Activated CD4-positive, alpha-beta T cell treated with anti-CD3 and anti-CD28 coated beads for 36 hours (primary cell): ENCODE measurements at regions of chr4 and their contacts with region 1.

Region 1: GRCh38 chr4:110516106-110516922 is 40.4 kb downstream of the ENPEP start:
- DNase-seq: peak; percentile 83
- ATAC-seq: peak; percentile 90
- H3K4me3 Mint-ChIP-seq: peak overlapping the region; percentile 87
- H3K27ac Mint-ChIP-seq: peak overlapping the region; percentile 48
- H3K4me1 Mint-ChIP-seq: peaks cover 15% of the 10 kb centered on the region
- H3K27me3 Mint-ChIP-seq: peaks cover 10% of the 10 kb centered on the region

Region 2: GRCh38 chr4:109998867-109999584 is 517.3 kb before region 1 on chr4:
- CTCF ChIA-PET with region 1: interaction called, 398 read pairs
- POLR2A ChIA-PET with region 1: no interaction called
- intact Hi-C with region 1: loop called (anchors 1 kb)
- DNase-seq: no peak
- ATAC-seq: peak; percentile 31
- H3K4me3 Mint-ChIP-seq: no peak overlapping the region
- H3K27ac Mint-ChIP-seq: no peak overlapping the region
- H3K4me1 Mint-ChIP-seq: peaks cover 10% of the 10 kb centered on the region
- H3K27me3 Mint-ChIP-seq: peaks cover 9% of the 10 kb centered on the region

Region 3: DNA sequence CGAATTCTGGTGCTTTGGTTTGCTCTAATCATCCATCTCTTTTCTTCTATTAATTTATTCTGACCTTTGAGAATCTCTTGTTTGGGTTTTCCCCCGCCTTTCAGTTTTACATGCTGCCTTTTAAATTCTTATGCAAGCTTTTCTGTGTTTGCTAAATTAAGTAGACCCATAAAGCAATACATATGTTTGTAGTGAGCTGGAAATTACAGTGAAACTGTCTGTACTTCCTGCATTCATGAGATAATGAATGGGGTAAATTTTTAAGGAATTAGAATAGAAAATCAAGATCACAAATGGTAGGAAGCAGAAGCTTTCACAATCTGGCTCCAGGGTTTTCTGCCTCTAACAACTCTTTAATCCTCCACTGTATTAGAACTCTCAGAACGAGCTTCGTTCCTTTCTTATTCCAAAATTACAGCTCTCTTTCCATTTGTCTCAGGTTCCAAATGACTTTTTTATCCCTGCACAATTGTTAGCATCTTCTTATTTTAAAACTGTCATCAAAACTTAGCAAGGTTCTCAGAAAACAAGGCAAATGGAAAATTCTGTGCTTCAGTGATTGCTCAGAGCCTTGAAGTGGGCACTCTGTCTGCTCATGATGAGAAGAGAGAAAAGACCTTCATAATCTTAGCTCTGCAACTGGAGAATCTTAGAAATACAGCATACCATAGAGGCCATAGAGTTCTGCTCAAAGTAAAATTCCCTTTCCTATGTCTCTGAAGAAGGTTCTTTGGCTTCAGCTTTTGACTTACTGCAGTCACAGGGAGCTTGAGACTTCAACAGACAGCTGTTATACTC is 495.5 kb before region 1 on chr4:
- CTCF ChIA-PET with region 1: interaction called, 13 read pairs
- POLR2A ChIA-PET with region 1: no interaction called
- intact Hi-C with region 1: no loop called
- DNase-seq: no peak
- ATAC-seq: no peak
- H3K4me3 Mint-ChIP-seq: no peak overlapping the region
- H3K27ac Mint-ChIP-seq: no peak overlapping the region
- H3K4me1 Mint-ChIP-seq: peaks cover 18% of the 10 kb centered on the region
- H3K27me3 Mint-ChIP-seq: no peaks in the 10 kb centered on the region

Region 4: GRCh38 chr4:110211007-110211769 is 305.1 kb before region 1 on chr4:
- CTCF ChIA-PET with region 1: interaction called, 4 read pairs
- POLR2A ChIA-PET with region 1: no interaction called
- intact Hi-C with region 1: loop called in 1 of 2 experiments (anchors 5 kb)
- DNase-seq: peak; percentile 28
- ATAC-seq: peak; percentile 60
- H3K4me3 Mint-ChIP-seq: no peak overlapping the region
- H3K27ac Mint-ChIP-seq: no peak overlapping the region
- H3K4me1 Mint-ChIP-seq: peaks cover 2% of the 10 kb centered on the region
- H3K27me3 Mint-ChIP-seq: no peaks in the 10 kb centered on the region

Region 5: GRCh38 chr4:110344162-110344561 is 172.2 kb before region 1 on chr4:
- CTCF ChIA-PET with region 1: interaction called, 12 read pairs
- POLR2A ChIA-PET with region 1: no interaction called
- intact Hi-C with region 1: loop called in 1 of 2 experiments (anchors 10 kb)
- DNase-seq: no peak
- ATAC-seq: no peak
- H3K4me3 Mint-ChIP-seq: no peak overlapping the region
- H3K27ac Mint-ChIP-seq: no peak overlapping the region
- H3K4me1 Mint-ChIP-seq: no peaks in the 10 kb centered on the region
- H3K27me3 Mint-ChIP-seq: peaks cover 13% of the 10 kb centered on the region

Region 6: GRCh38 chr4:110926841-110927400 is 410.6 kb after region 1 on chr4:
- CTCF ChIA-PET with region 1: no interaction called
- POLR2A ChIA-PET with region 1: no interaction called
- intact Hi-C with region 1: no loop called
- DNase-seq: no peak
- ATAC-seq: no peak
- H3K4me3 Mint-ChIP-seq: no peak overlapping the region
- H3K27ac Mint-ChIP-seq: no peak overlapping the region
- H3K4me1 Mint-ChIP-seq: no peaks in the 10 kb centered on the region
- H3K27me3 Mint-ChIP-seq: no peaks in the 10 kb centered on the region